ENCODE measurements at regions of chr4 and their contacts with region 1.

Region 1: GRCh38 chr4:101169044-101170014 is 178.0 kb downstream of the PPP3CA start:
- DNase-seq: peak; percentile 76
- ATAC-seq: peak; percentile 99
- H3K4me3 Mint-ChIP-seq: no peak overlapping the region
- H3K27ac Mint-ChIP-seq: no peak overlapping the region
- H3K4me1 Mint-ChIP-seq: peaks cover 2% of the 10 kb centered on the region
- H3K27me3 Mint-ChIP-seq: no peaks in the 10 kb centered on the region

Region 2: GRCh38 chr4:100728861-100729260 is 440.5 kb before region 1 on chr4:
- CTCF ChIA-PET with region 1: no interaction called
- POLR2A ChIA-PET with region 1: no interaction called
- intact Hi-C with region 1: no loop called
- DNase-seq: no peak
- ATAC-seq: no peak
- H3K4me3 Mint-ChIP-seq: no peak overlapping the region
- H3K27ac Mint-ChIP-seq: no peak overlapping the region
- H3K4me1 Mint-ChIP-seq: no peaks in the 10 kb centered on the region
- H3K27me3 Mint-ChIP-seq: peaks cover 4% of the 10 kb centered on the region

Region 3: DNA sequence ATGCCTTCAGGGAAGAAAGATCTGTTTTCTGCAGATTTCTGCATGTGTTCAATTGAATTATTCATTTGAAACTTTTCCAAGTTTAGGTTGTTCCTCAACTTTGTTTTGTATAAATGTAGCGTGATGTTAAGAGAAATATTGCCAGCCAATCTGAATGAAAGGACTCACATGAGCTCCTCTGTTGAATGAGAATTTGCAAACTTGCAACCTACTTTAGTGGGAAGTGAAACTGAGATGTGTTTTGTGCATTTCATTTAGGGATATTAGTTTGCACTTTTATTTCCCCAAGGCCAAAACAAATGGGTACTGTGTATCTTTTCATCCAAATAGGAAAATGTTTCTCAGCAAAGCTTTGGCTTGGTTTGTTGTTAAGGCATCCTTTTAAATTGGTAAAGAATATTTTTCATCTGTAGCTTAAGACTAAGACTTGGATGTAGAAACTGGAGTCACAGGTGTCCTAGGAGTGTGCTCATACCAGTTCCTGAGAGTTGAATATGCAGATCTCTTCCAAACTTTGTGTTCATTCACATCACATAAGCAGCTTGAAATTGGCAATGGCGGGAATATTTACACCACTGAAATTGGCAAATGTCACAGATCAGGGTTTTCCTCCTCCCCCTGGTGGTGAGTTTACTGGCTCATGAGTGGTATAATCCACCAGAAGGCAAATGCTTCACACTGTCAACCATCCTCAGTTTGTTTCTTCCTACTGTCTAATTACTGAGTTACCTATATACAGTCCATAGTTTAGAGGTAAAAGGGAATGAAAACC is 427.6 kb after region 1 on chr4:
- CTCF ChIA-PET with region 1: interaction called, 3 read pairs
- POLR2A ChIA-PET with region 1: no interaction called
- intact Hi-C with region 1: loop called (anchors 1 to 2 kb)
- DNase-seq: peak; percentile 39
- ATAC-seq: no peak
- H3K4me3 Mint-ChIP-seq: no peak overlapping the region
- H3K27ac Mint-ChIP-seq: no peak overlapping the region
- H3K4me1 Mint-ChIP-seq: no peaks in the 10 kb centered on the region
- H3K27me3 Mint-ChIP-seq: no peaks in the 10 kb centered on the region

Region 4: GRCh38 chr4:101730291-101731117 is 561.2 kb after region 1 on chr4:
- CTCF ChIA-PET with region 1: interaction called, 34 read pairs
- POLR2A ChIA-PET with region 1: no interaction called
- intact Hi-C with region 1: loop called (anchors 1 kb)
- DNase-seq: peak; percentile 74
- ATAC-seq: peak; percentile 83
- H3K4me3 Mint-ChIP-seq: no peak overlapping the region
- H3K27ac Mint-ChIP-seq: no peak overlapping the region
- H3K4me1 Mint-ChIP-seq: no peaks in the 10 kb centered on the region
- H3K27me3 Mint-ChIP-seq: peaks cover 3% of the 10 kb centered on the region

Region 5: DNA sequence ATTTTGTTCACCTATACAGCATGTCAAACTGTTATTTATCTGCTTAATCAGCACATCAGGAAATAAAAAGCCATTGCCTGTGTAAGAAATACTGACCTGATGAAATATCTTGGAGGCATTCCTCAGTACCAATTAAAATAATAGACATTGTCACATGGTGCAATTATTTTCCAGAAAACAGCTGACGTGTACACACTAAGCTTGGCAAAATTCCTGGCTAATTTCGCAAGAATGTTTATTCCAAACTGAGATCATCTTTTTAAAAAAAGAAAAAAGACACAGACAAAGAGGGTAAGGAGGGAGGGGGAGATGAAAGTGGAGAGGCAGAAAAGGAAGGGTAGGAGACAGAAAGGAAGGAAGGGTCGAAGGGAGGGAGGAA is 1269.9 kb after region 1 on chr4:
- CTCF ChIA-PET with region 1: no interaction called
- POLR2A ChIA-PET with region 1: no interaction called
- intact Hi-C with region 1: loop called in 1 of 2 experiments (anchors 10 kb)
- DNase-seq: no peak
- ATAC-seq: no peak
- H3K4me3 Mint-ChIP-seq: no peak overlapping the region
- H3K27ac Mint-ChIP-seq: no peak overlapping the region
- H3K4me1 Mint-ChIP-seq: no peaks in the 10 kb centered on the region
- H3K27me3 Mint-ChIP-seq: no peaks in the 10 kb centered on the region